ENCODE measurements at regions of chr16 and their contacts with region 1.

Region 1: DNA sequence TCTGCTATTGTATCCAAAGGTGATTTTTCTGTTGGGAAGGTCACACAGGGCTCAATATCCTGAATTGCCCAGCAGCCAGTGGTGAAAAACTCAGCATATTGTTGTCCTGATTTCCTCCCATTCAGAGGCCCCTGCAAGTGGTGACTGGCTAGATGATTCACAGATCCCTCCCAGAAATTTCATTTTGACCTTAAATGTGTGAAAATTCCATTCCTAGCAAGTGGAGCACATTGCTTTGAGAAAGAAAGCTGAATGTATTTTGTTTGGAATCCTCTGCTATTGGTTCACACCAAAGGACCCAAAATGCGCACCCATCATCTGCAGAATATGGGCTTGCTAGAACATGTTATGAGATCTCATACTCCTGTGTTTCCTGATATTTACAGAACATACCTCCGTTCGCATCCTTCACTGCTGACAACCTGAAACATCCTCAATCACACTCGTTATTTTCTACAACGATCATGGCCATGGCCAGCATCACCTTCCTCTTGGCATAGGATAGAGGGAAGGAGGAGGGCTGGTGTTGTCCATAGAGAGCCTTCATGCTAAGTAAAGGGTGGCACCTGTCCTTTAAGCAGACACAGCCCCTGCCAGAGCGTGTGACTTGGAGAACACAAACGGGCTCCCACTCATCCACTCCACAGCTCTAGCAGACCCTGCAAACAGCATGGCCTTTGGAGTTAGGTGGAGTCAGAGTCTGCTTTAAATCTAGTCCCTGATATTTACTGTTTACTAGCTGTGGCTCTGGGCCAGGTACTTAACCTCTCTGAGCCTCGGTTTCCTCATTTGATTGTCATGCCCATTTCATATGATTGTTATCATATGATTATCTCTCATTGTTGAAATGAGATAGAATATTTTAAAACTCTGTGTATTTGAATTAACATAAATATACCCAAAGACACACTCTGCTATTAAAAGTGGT is 30.4 kb upstream of the NFAT5 start:
- DNase-seq: no peak
- H3K4me3 ChIP-seq: no peak overlapping the region
- H3K27ac ChIP-seq: no peak overlapping the region
- H3K4me1 ChIP-seq: peaks cover 32% of the 10 kb centered on the region
- H3K27me3 ChIP-seq: no peaks in the 10 kb centered on the region
- CTCF ChIP-seq: no peak

Region 2: GRCh38 chr16:69513188-69513961 is 22.0 kb before region 1 on chr16:
- CTCF ChIA-PET with region 1: interaction called, 3 read pairs
- POLR2A ChIA-PET with region 1: no interaction called
- intact Hi-C with region 1: loop called (anchors 1 kb)
- DNase-seq: peak; percentile 89 to 99
- H3K4me3 ChIP-seq: peak overlapping the region; percentile 25; the same call in 1 of the 2 replicates
- H3K27ac ChIP-seq: peak overlapping the region; percentile 100
- H3K4me1 ChIP-seq: peaks cover 44% of the 10 kb centered on the region
- H3K27me3 ChIP-seq: no peaks in the 10 kb centered on the region
- CTCF ChIP-seq: no peak

Region 3: GRCh38 chr16:69554495-69554894 is 19.1 kb after region 1 on chr16:
- CTCF ChIA-PET with region 1: interaction called, 11 read pairs
- POLR2A ChIA-PET with region 1: interaction called, 6 read pairs
- intact Hi-C with region 1: no loop called
- DNase-seq: no peak
- H3K4me3 ChIP-seq: no peak overlapping the region
- H3K27ac ChIP-seq: no peak overlapping the region
- H3K4me1 ChIP-seq: no peaks in the 10 kb centered on the region
- H3K27me3 ChIP-seq: no peaks in the 10 kb centered on the region
- CTCF ChIP-seq: no peak

Region 4: GRCh38 chr16:69613378-69614154 is 78.2 kb after region 1 on chr16:
- CTCF ChIA-PET with region 1: no interaction called
- POLR2A ChIA-PET with region 1: no interaction called
- intact Hi-C with region 1: no loop called
- DNase-seq: peak; percentile 13 to 82
- H3K4me3 ChIP-seq: no peak overlapping the region
- H3K27ac ChIP-seq: peak overlapping the region; percentile 82
- H3K4me1 ChIP-seq: peaks cover 45% of the 10 kb centered on the region
- H3K27me3 ChIP-seq: no peaks in the 10 kb centered on the region
- CTCF ChIP-seq: no peak

Measured in PC-9 (cell line).